ENCODE measurements at regions of chr1 and their contacts with region 1.

Region 1: GRCh38 chr1:7888248-7889081 is 35.6 kb upstream of the UTS2 start:
- DNase-seq: peak; percentile 15
- H3K4me3 ChIP-seq: no peak overlapping the region
- H3K27ac ChIP-seq: no peak overlapping the region
- H3K27me3 ChIP-seq: peaks cover 2% of the 10 kb centered on the region
- CTCF ChIP-seq: no peak

Region 2: GRCh38 chr1:7878027-7878426 is 10.4 kb before region 1 on chr1:
- CTCF ChIA-PET with region 1: no interaction called
- POLR2A ChIA-PET with region 1: no interaction called
- DNase-seq: no peak
- H3K4me3 ChIP-seq: no peak overlapping the region
- H3K27ac ChIP-seq: no peak overlapping the region
- H3K27me3 ChIP-seq: peaks cover 11% of the 10 kb centered on the region
- CTCF ChIP-seq: no peak

Region 3: DNA sequence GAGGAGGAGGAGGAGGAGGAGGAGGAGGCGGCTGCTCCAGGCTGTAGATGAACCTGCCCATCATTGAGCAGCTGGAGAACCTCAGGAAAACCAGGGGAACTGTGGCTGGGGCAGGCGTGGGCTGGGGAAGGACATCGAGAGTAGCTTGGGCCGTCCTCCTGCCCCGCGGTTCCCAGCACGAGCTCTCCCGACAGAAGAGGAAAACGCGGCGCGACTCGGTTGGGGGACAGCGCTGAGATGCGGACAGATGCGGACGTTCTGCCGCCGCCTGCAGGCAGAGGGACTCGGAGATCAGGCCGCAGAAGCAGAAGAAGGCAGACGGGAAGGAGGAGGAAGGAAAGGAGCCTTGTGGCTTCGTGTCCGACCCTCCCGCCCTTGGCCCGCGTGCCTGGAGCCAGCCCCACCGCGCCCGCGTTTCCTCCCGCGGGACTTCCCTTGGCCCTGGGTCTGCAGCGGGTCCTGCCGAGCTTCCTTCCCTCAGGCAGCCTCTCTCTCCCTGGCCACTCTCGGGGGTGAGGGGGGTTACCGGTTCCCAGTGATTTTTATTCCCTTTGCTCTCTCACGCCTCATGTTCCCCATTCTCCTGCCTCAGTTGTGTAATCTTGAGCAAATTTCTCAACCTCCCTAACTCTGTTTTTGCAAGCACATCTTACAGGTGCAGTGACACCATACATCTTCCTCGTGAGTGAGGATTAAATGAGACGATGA is 53.9 kb after region 1 on chr1:
- CTCF ChIA-PET with region 1: interaction called, 13 read pairs
- POLR2A ChIA-PET with region 1: no interaction called
- DNase-seq: no peak
- H3K4me3 ChIP-seq: peak overlapping the region; percentile 22
- H3K27ac ChIP-seq: no peak overlapping the region
- H3K27me3 ChIP-seq: peaks cover 5% of the 10 kb centered on the region
- CTCF ChIP-seq: peak; percentile 46

Measured in AG04450 (cell line).